Esophagus muscularis mucosa (tissue), 4 donors: ENCODE measurements at regions of chr18 and their contacts with region 1.

Region 1: DNA sequence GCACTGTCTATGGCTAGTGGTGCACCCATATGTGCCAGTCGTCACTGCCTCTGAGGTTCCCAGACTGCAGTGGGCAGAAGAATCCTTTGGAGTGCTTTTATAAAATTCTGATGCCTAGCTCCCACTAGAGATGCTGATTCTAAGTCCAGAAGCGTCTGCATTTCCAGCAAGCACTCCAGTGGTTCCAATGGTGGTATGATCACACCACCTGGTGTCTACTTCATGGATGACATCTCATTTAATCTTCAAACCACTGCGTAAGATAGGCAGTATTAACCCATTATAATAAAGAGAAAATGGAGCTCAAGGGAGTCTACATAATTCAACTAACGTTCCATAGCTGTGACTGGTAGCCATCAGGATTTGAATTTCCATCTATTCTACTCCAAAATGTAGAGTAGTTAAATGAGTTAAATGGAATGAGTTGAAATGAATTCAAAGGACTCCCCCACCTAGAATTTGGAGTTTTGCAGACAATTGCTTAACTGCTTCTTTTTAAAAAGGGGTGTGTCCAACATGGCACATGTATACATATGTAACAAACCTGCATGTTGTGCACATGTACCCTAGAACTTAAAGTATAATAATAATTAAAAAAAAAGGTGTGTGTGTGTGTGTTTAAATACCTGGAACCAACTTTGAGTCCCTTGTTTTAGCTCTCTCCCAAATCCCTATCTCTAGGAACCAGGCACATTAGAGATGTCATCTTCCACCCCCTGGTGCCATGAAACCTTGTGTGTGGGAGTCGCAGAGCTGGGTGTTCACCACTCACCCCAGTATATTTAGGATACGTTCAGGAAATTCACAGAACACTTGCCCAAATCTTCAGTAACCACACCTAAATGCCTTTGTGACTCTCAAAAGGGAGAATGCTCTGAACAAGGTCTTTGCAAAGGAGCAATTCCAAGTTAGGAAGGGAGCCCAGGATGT is 14.1 kb downstream of the LAMA3 start:
- DNase-seq: no peak
- H3K4me3 ChIP-seq: no peak overlapping the region
- H3K27ac ChIP-seq: no peak overlapping the region
- H3K4me1 ChIP-seq: peaks cover 0 to 13% (median 5%) of the 10 kb centered on the region in 4 donors
- H3K27me3 ChIP-seq: no peaks in the 10 kb centered on the region
- CTCF ChIP-seq: peak; percentile 49 to 53 (median 50)
- EP300 ChIP-seq: no peak
- POLR2A ChIP-seq: no peak

Region 2: GRCh38 chr18:23515911-23516546 is 187.3 kb before region 1 on chr18:
- intact Hi-C with region 1: loop called (anchors 10 kb)
- DNase-seq: no peak
- H3K4me3 ChIP-seq: no peak overlapping the region
- H3K27ac ChIP-seq: peak overlapping the region in 1 of 4 donors; percentile 41
- H3K4me1 ChIP-seq: peaks cover 0 to 17% (median 8%) of the 10 kb centered on the region in 4 donors
- H3K27me3 ChIP-seq: no peaks in the 10 kb centered on the region
- CTCF ChIP-seq: peak; percentile 70 to 89 (median 79)
- EP300 ChIP-seq: no peak
- POLR2A ChIP-seq: no peak

Region 3: GRCh38 chr18:23619388-23619881 is 83.9 kb before region 1 on chr18:
- intact Hi-C with region 1: loop called (anchors 2 kb)
- DNase-seq: no peak
- H3K4me3 ChIP-seq: peak overlapping the region; percentile 54 to 63 (median 56)
- H3K27ac ChIP-seq: peak overlapping the region; percentile 85 to 91 (median 90)
- H3K4me1 ChIP-seq: peaks cover 13 to 44% (median 24%) of the 10 kb centered on the region in 4 donors
- H3K27me3 ChIP-seq: no peaks in the 10 kb centered on the region
- CTCF ChIP-seq: peak in 1 of 3 experiments; percentile 17
- EP300 ChIP-seq: no peak
- POLR2A ChIP-seq: no peak